ENCODE measurements at regions of chr9 and their contacts with region 1.

Region 1: GRCh38 chr9:78296893-78297671 is at the start of gene PSAT1:
- H3K4me3 ChIP-seq: peak within 1 kb of the TSS; percentile 64
- H3K27ac ChIP-seq: peak within 1 kb of the TSS; percentile 82
- H3K4me1 ChIP-seq: 0 out of 2 replicates have a peak, but pooled peaks cover 6% of the 10 kb centered on the region
- CTCF ChIP-seq: peak; percentile 82

Region 2: DNA sequence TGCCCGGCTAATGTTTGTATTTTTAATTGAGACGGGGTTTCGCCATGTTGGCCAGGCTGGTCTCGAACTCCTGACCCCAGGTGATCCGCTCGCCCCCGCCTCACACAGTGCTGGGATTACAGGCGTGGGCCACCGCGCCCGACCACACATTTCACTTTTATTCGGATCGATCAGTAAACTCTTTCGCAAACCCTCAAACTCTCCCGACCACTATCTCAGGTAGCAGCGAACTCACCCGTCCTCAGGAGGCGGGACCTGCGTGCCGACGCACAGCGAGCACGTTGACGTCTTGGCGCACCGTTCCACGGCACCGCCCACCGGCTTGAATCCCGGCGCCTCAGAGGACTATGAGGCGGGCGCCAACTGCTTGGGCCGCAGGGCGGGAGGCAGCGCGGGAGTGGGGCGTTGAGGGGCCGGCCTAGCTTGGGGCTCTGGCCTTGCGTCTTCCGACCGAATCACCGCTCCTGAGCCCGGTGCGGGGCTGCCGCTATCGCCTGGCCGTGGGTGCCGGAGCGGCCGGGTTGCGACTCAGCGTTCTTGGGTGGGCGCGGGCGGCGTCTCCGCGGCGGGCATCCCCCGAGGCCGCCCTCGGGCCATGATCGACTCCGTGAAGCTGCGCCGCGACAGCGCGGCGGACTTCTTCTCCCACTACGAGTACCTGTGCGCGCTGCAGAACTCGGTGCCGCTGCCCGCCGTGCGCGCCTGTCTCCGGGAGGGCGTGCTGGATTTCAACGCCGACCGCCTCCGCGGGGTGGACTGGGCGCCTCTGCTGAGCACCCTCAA is 61.1 kb before region 1 on chr9 and contains the start of gene CEP78:
- CTCF ChIA-PET with region 1: interaction called, 5 read pairs
- POLR2A ChIA-PET with region 1: interaction called, 33 read pairs
- H3K4me3 ChIP-seq: peak within 1 kb of the TSS; percentile 87
- H3K27ac ChIP-seq: peak within 1 kb of the TSS; percentile 88
- H3K4me1 ChIP-seq: no peaks in the 10 kb centered on the region; the same call in 1 of the 2 replicates
- CTCF ChIP-seq: 0 out of 2 replicates have a peak, but pooled peaks have one; percentile 26

Region 3: GRCh38 chr9:78273761-78274160 is 23.3 kb before region 1 on chr9:
- CTCF ChIA-PET with region 1: interaction called, 3 read pairs
- POLR2A ChIA-PET with region 1: interaction called, 32 read pairs
- H3K4me3 ChIP-seq: no peak overlapping the region
- H3K27ac ChIP-seq: no peak overlapping the region
- H3K4me1 ChIP-seq: peaks cover 9% of the 10 kb centered on the region; the same call in 1 of the 2 replicates
- CTCF ChIP-seq: no peak

Region 4: GRCh38 chr9:78280982-78281668 is 16.0 kb before region 1 on chr9:
- CTCF ChIA-PET with region 1: interaction called, 4 read pairs
- POLR2A ChIA-PET with region 1: interaction called, 32 read pairs
- H3K4me3 ChIP-seq: no peak overlapping the region
- H3K27ac ChIP-seq: no peak overlapping the region
- H3K4me1 ChIP-seq: peaks cover 9% of the 10 kb centered on the region; the same call in 1 of the 2 replicates
- CTCF ChIP-seq: no peak

Region 5: GRCh38 chr9:78314953-78315870 is 18.1 kb after region 1 on chr9:
- CTCF ChIA-PET with region 1: no interaction called
- POLR2A ChIA-PET with region 1: interaction called, 70 read pairs
- H3K4me3 ChIP-seq: no peak overlapping the region
- H3K27ac ChIP-seq: 0 out of 2 replicates have a peak overlapping the region, but pooled peaks have one; percentile 9
- H3K4me1 ChIP-seq: no peaks in the 10 kb centered on the region
- CTCF ChIP-seq: no peak

Measured in HEK293 (cell line).